ENCODE measurements at regions of chr1 and their contacts with region 1.

Region 1: DNA sequence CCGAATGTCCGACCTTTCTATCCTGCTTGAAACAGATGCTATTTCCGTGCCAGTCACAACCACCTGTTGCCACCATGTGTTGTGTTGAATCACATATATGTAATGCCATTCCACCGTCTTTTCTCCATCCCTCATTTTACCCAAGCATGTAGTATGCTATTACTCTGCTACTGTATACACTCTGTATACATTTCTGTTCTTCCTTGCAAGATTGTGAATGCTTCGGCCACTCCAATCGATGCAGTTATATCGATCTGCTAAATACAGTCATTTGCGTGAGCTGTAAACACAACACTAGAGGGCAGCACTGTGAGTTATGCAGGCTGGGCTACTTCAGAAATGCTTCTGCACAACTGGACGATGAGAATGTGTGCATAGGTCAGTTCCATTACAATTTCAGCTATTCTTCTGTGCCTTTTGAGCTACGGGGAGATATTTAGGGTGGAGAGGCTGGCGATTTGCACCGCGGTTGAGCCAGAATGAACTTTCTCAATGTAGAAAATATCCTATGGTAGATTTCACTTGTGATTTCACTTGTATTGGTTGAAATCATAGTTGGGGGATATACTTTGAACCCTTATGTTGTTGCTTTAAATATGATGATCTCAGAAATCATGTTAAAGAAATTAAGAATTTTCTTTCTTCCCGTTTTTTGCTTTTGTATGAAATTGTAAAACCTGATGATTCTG is 289.8 kb downstream of the NTNG1 start:
- DNase-seq: peak; percentile 71
- ATAC-seq: peak; percentile 56
- H3K4me3 ChIP-seq: no peak overlapping the region
- H3K4me3 Mint-ChIP-seq: peak overlapping the region; percentile 17
- H3K27ac ChIP-seq: no peak overlapping the region
- H3K27ac Mint-ChIP-seq: no peak overlapping the region
- H3K4me1 ChIP-seq: peaks cover 24 to 26% of the 10 kb centered on the region in 2 donors
- H3K4me1 Mint-ChIP-seq: peaks cover 22% of the 10 kb centered on the region
- H3K27me3 ChIP-seq: no peaks in the 10 kb centered on the region
- H3K27me3 Mint-ChIP-seq: no peaks in the 10 kb centered on the region
- CTCF ChIP-seq: peak; percentile 86

Region 2: DNA sequence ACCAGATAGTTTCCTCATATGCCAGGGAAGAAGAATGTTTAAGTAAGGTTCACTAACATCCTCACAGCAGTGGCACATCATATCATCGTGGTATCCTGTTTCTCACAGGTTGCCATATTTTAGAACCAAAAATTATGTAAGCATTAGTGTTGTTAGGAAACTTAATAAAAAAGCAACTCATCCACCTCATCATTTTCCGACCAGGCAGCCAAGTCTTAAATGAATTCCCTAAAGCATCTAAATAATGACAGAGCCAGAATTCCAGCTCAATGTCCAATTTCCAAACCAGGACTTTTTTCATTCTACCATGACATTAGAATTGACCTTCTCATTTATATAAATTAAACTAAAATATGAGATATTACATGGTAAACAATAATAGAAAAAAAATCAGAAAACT is 17.1 kb before region 1 on chr1:
- CTCF ChIA-PET with region 1: no interaction called
- POLR2A ChIA-PET with region 1: no interaction called
- intact Hi-C with region 1: no loop called
- DNase-seq: no peak
- ATAC-seq: no peak
- H3K4me3 ChIP-seq: no peak overlapping the region
- H3K4me3 Mint-ChIP-seq: no peak overlapping the region
- H3K27ac ChIP-seq: no peak overlapping the region
- H3K27ac Mint-ChIP-seq: no peak overlapping the region
- H3K4me1 ChIP-seq: no peaks in the 10 kb centered on the region
- H3K4me1 Mint-ChIP-seq: no peaks in the 10 kb centered on the region
- H3K27me3 ChIP-seq: no peaks in the 10 kb centered on the region
- H3K27me3 Mint-ChIP-seq: peaks cover 8% of the 10 kb centered on the region
- CTCF ChIP-seq: no peak

Region 3: GRCh38 chr1:107442551-107442950 is 11.9 kb after region 1 on chr1:
- CTCF ChIA-PET with region 1: interaction called, 46 read pairs
- POLR2A ChIA-PET with region 1: no interaction called
- intact Hi-C with region 1: no loop called
- DNase-seq: no peak
- ATAC-seq: no peak
- H3K4me3 ChIP-seq: no peak overlapping the region
- H3K4me3 Mint-ChIP-seq: no peak overlapping the region
- H3K27ac ChIP-seq: no peak overlapping the region
- H3K27ac Mint-ChIP-seq: peak overlapping the region; percentile 15
- H3K4me1 ChIP-seq: peaks cover 8 to 14% of the 10 kb centered on the region in 2 donors
- H3K4me1 Mint-ChIP-seq: peaks cover 39% of the 10 kb centered on the region
- H3K27me3 ChIP-seq: no peaks in the 10 kb centered on the region
- H3K27me3 Mint-ChIP-seq: no peaks in the 10 kb centered on the region
- CTCF ChIP-seq: no peak

Region 4: GRCh38 chr1:107460035-107460434 is 29.4 kb after region 1 on chr1:
- CTCF ChIA-PET with region 1: interaction called, 15 read pairs
- POLR2A ChIA-PET with region 1: no interaction called
- intact Hi-C with region 1: no loop called
- DNase-seq: no peak
- ATAC-seq: peak; percentile 41
- H3K4me3 ChIP-seq: no peak overlapping the region
- H3K4me3 Mint-ChIP-seq: peak overlapping the region; percentile 55
- H3K27ac ChIP-seq: no peak overlapping the region
- H3K27ac Mint-ChIP-seq: no peak overlapping the region
- H3K4me1 ChIP-seq: peaks cover 27 to 28% of the 10 kb centered on the region in 2 donors
- H3K4me1 Mint-ChIP-seq: peaks cover 31% of the 10 kb centered on the region
- H3K27me3 ChIP-seq: no peaks in the 10 kb centered on the region
- H3K27me3 Mint-ChIP-seq: no peaks in the 10 kb centered on the region
- CTCF ChIP-seq: no peak

Region 5: DNA sequence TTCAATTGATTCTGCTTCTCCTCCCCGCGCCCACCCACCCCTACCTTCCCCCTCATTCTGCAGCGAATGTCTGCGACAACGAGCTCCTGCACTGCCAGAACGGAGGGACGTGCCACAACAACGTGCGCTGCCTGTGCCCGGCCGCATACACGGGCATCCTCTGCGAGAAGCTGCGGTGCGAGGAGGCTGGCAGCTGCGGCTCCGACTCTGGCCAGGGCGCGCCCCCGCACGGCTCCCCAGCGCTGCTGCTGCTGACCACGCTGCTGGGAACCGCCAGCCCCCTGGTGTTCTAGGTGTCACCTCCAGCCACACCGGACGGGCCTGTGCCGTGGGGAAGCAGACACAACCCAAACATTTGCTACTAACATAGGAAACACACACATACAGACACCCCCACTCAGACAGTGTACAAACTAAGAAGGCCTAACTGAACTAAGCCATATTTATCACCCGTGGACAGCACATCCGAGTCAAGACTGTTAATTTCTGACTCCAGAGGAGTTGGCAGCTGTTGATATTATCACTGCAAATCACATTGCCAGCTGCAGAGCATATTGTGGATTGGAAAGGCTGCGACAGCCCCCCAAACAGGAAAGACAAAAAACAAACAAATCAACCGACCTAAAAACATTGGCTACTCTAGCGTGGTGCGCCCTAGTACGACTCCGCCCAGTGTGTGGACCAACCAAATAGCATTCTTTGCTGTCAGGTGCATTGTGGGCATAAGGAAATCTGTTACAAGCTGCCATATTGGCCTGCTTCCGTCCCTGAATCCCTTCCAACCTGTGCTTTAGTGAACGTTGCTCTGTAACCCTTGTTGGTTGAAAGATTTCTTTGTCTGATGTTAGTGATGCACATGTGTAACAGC is 50.1 kb after region 1 on chr1:
- CTCF ChIA-PET with region 1: interaction called, 63 read pairs
- POLR2A ChIA-PET with region 1: no interaction called
- intact Hi-C with region 1: loop called (anchors 1 kb)
- DNase-seq: peak; percentile 66
- ATAC-seq: peak; percentile 90
- H3K4me3 ChIP-seq: peak overlapping the region in 4 of 5 experiments; percentile 7 to 53 (median 42)
- H3K4me3 Mint-ChIP-seq: peak overlapping the region; percentile 89
- H3K27ac ChIP-seq: no peak overlapping the region
- H3K27ac Mint-ChIP-seq: no peak overlapping the region
- H3K4me1 ChIP-seq: peaks cover 8 to 12% of the 10 kb centered on the region in 2 donors
- H3K4me1 Mint-ChIP-seq: peaks cover 12% of the 10 kb centered on the region
- H3K27me3 ChIP-seq: peaks cover 0 to 3% (median 0%) of the 10 kb centered on the region in 4 experiments
- H3K27me3 Mint-ChIP-seq: no peaks in the 10 kb centered on the region
- CTCF ChIP-seq: peak; percentile 28

Region 6: GRCh38 chr1:107750358-107750959 is 319.8 kb after region 1 on chr1:
- CTCF ChIA-PET with region 1: interaction called, 6 read pairs
- POLR2A ChIA-PET with region 1: no interaction called
- intact Hi-C with region 1: loop called (anchors 5 kb)
- DNase-seq: peak; percentile 53
- ATAC-seq: no peak
- H3K4me3 ChIP-seq: no peak overlapping the region
- H3K4me3 Mint-ChIP-seq: no peak overlapping the region
- H3K27ac ChIP-seq: no peak overlapping the region
- H3K27ac Mint-ChIP-seq: no peak overlapping the region
- H3K4me1 ChIP-seq: no peaks in the 10 kb centered on the region
- H3K4me1 Mint-ChIP-seq: no peaks in the 10 kb centered on the region
- H3K27me3 ChIP-seq: no peaks in the 10 kb centered on the region
- H3K27me3 Mint-ChIP-seq: no peaks in the 10 kb centered on the region
- CTCF ChIP-seq: peak; percentile 74